Mammary epithelial cell (primary cell): ENCODE measurements at regions of chr7 and their contacts with region 1.

Region 1: GRCh38 chr7:46932676-46933424 is 649.1 kb downstream of the TNS3 start:
- DNase-seq: peak; percentile 92
- H3K4me3 ChIP-seq: peak overlapping the region in 2 of 3 experiments; percentile 18 to 25
- H3K27ac ChIP-seq: peak overlapping the region; percentile 95
- H3K4me1 ChIP-seq: peaks cover 36% of the 10 kb centered on the region
- H3K27me3 ChIP-seq: no peaks in the 10 kb centered on the region
- CTCF ChIP-seq: peak; percentile 41 to 55

Region 2: GRCh38 chr7:45917658-45918057 is 1015.2 kb before region 1 on chr7:
- CTCF ChIA-PET with region 1: interaction called, 3 read pairs
- dilution Hi-C with region 1: no loop called
- in situ Hi-C with region 1: loop called in 1 of 2 experiments (anchors 25 kb)
- intact Hi-C with region 1: no loop called
- DNase-seq: peak; percentile 35
- H3K4me3 ChIP-seq: no peak overlapping the region
- H3K27ac ChIP-seq: no peak overlapping the region
- H3K4me1 ChIP-seq: peaks cover 19% of the 10 kb centered on the region
- H3K27me3 ChIP-seq: peaks cover 6% of the 10 kb centered on the region
- CTCF ChIP-seq: peak; percentile 90 to 95

Region 3: DNA sequence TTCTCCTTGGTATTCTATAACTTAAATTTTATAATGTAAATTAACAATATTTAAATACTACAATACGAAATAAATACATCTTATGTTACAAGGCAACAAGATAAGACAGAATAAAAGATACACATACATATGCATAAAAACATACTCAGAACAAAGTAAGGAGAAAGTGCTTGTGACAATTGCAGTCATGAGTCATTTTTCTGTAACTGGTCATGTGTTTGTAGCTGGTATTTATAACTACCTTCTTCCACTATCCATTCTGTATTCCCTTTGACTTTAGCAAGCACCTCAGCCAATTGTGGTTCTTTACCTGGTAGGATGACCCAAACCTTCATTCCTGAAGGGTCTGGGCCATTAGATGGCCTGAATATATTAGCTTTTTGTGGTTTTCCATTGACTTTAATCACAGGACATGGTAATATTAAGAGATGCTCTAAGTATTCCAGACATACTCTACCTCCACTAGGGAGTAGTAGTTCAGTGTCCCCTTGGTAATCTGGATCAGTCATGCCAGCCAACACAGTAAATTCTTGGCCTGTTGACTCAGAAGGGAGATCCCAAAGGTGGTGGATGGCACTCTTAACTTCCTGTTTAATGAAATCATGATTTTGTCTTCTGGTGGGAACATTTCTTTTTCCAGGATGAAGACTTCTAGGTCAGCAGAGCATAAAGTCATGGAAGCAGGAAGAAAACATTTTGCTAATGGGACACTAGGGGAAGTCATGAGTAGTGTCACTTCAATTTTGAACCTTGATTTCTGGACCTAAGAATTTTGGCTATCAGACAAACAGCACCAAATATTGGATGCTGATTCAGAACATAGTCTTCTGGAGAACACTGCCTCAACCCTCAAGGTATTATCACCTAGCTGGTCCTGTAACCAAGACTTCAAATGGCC is 278.1 kb before region 1 on chr7:
- CTCF ChIA-PET with region 1: no interaction called
- dilution Hi-C with region 1: no loop called
- in situ Hi-C with region 1: loop called in 1 of 2 experiments (anchors 10 kb)
- intact Hi-C with region 1: loop called (anchors 2 kb)
- DNase-seq: peak; percentile 86
- H3K4me3 ChIP-seq: no peak overlapping the region
- H3K27ac ChIP-seq: peak overlapping the region; percentile 73
- H3K4me1 ChIP-seq: peaks cover 35% of the 10 kb centered on the region
- H3K27me3 ChIP-seq: no peaks in the 10 kb centered on the region
- CTCF ChIP-seq: peak in 1 of 2 donors; percentile 0

Region 4: GRCh38 chr7:46784746-46785145 is 148.1 kb before region 1 on chr7:
- CTCF ChIA-PET with region 1: no interaction called
- dilution Hi-C with region 1: no loop called
- in situ Hi-C with region 1: loop called in 1 of 2 experiments (anchors 10 kb)
- intact Hi-C with region 1: loop called (anchors 2 kb)
- DNase-seq: peak; percentile 90
- H3K4me3 ChIP-seq: no peak overlapping the region
- H3K27ac ChIP-seq: peak overlapping the region; percentile 22
- H3K4me1 ChIP-seq: peaks cover 21% of the 10 kb centered on the region
- H3K27me3 ChIP-seq: no peaks in the 10 kb centered on the region
- CTCF ChIP-seq: no peak

Region 5: DNA sequence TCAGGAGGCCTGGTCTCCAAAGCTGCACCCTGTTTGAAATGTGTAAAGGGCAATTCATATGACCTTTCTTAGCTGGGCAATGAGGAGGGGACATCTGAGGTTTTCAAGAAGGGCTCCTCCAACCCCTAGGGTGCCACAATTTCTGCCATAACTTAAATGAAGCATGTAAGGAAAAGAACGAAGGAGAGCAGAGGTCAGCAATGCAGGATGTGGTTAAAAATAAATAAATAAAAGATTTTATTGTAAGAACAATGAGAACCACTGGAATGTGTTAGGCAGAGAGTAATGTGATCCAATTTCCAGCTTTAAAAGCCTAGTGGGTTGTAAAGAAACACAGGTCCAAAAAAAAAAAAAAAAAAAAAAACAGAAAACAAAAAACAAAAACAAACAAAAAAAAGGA is 24.1 kb before region 1 on chr7:
- CTCF ChIA-PET with region 1: no interaction called
- dilution Hi-C with region 1: no loop called
- in situ Hi-C with region 1: no loop called
- intact Hi-C with region 1: loop called (anchors 2 kb)
- DNase-seq: peak; percentile 64
- H3K4me3 ChIP-seq: no peak overlapping the region
- H3K27ac ChIP-seq: peak overlapping the region; percentile 45
- H3K4me1 ChIP-seq: peaks cover 24% of the 10 kb centered on the region
- H3K27me3 ChIP-seq: no peaks in the 10 kb centered on the region
- CTCF ChIP-seq: no peak

Region 6: DNA sequence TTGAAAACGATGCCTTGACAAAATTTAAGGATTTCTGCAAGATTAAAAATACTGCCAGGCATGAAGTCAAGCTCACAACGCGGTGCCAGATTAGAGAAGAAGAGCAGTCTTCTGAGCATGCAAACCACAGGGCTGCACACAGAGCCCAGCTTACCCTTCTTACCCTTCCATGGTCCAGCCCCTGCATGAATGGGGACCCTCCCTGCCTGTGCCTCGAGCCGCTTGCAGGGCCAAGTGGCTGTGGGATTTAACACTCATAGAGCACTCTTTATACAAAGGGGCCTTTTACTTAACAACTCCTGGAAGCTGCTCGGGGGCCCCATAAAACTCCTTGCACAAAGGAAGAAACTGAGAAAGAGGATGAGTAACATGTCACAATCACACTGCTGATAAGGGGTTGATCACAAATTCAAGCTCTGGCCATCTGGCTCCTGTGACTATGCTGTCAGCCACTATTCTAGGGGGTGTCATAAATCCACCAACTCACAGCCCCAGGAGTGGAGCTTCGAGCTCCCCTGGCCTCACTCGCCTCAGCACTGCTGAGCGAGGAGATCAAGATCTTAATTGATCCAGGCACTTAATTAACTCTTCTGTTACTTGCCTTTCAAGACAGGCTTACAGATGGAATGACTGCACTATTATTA is 134.2 kb after region 1 on chr7:
- CTCF ChIA-PET with region 1: no interaction called
- dilution Hi-C with region 1: no loop called
- in situ Hi-C with region 1: no loop called
- intact Hi-C with region 1: no loop called
- DNase-seq: no peak
- H3K4me3 ChIP-seq: no peak overlapping the region
- H3K27ac ChIP-seq: no peak overlapping the region
- H3K4me1 ChIP-seq: no peaks in the 10 kb centered on the region
- H3K27me3 ChIP-seq: no peaks in the 10 kb centered on the region
- CTCF ChIP-seq: no peak